ENCODE measurements at regions of chr5 and their contacts with region 1.

Region 1: GRCh38 chr5:16456103-16456832 is 9.3 kb downstream of the ZNF622 start:
- DNase-seq: no peak
- ATAC-seq: peak; percentile 74
- H3K4me3 Mint-ChIP-seq: no peak overlapping the region
- H3K27ac Mint-ChIP-seq: no peak overlapping the region
- H3K4me1 Mint-ChIP-seq: peaks cover 8% of the 10 kb centered on the region
- H3K27me3 Mint-ChIP-seq: no peaks in the 10 kb centered on the region
- CTCF ChIP-seq: peak; percentile 55; the same call in 1 of the 2 replicates

Region 2: DNA sequence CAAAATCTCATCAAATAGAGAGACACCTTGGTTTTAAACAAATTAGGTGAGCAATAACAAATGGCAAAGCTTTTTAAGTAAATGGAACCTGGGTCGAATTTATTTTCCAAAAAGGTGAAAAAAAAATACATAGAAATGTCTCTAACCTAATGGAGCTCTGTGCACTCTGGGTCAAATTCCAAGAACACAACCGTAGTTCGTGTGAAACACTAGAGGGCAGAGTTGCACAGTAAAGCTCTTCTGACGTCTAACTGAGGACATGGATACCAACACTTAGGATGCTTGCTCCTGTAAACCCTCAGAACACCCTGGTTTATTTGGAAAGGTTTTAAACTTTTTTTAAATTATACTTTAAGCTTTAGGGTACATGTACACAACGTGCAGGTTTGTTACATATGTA is 295.6 kb before region 1 on chr5:
- CTCF ChIA-PET with region 1: interaction called, 82 read pairs
- POLR2A ChIA-PET with region 1: no interaction called
- DNase-seq: no peak
- ATAC-seq: peak; percentile 99
- H3K4me3 Mint-ChIP-seq: no peak overlapping the region
- H3K27ac Mint-ChIP-seq: no peak overlapping the region
- H3K4me1 Mint-ChIP-seq: no peaks in the 10 kb centered on the region
- H3K27me3 Mint-ChIP-seq: no peaks in the 10 kb centered on the region
- CTCF ChIP-seq: peak; percentile 54

Region 3: GRCh38 chr5:16178745-16179372 is 277.4 kb before region 1 on chr5:
- CTCF ChIA-PET with region 1: interaction called, 11 read pairs
- POLR2A ChIA-PET with region 1: no interaction called
- DNase-seq: peak; percentile 96
- ATAC-seq: peak; percentile 88
- H3K4me3 Mint-ChIP-seq: peak overlapping the region; percentile 57
- H3K27ac Mint-ChIP-seq: no peak overlapping the region
- H3K4me1 Mint-ChIP-seq: peaks cover 13% of the 10 kb centered on the region
- H3K27me3 Mint-ChIP-seq: peaks cover 54% of the 10 kb centered on the region
- CTCF ChIP-seq: no peak

Region 4: DNA sequence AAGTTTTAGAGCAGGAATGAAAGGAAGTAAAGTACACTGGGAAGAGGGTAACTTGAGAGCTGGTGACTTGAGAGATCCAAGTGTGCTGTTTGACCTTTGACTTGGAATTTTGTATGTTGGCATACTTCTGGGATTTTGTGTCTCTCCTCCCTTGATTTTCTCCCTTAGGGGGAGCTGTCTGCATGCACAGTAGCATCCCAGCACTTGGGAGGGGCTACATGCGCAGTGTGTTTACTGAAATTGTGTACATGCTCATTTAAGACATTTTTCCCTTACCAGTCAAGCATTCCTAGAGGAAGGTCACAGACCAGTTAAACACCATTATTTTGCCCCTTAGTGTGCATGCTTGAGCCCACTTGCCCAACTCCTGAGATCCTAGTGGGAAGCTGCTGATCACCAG is 110.8 kb before region 1 on chr5:
- CTCF ChIA-PET with region 1: interaction called, 16 read pairs
- POLR2A ChIA-PET with region 1: no interaction called
- DNase-seq: no peak
- ATAC-seq: peak; percentile 72
- H3K4me3 Mint-ChIP-seq: no peak overlapping the region
- H3K27ac Mint-ChIP-seq: no peak overlapping the region
- H3K4me1 Mint-ChIP-seq: no peaks in the 10 kb centered on the region
- H3K27me3 Mint-ChIP-seq: no peaks in the 10 kb centered on the region; the same call in none of the 2 replicates
- CTCF ChIP-seq: no peak

Region 5: GRCh38 chr5:16427587-16427986 is 28.7 kb before region 1 on chr5:
- CTCF ChIA-PET with region 1: interaction called, 10 read pairs
- POLR2A ChIA-PET with region 1: no interaction called
- DNase-seq: no peak
- ATAC-seq: no peak
- H3K4me3 Mint-ChIP-seq: no peak overlapping the region
- H3K27ac Mint-ChIP-seq: no peak overlapping the region
- H3K4me1 Mint-ChIP-seq: peaks cover 68% of the 10 kb centered on the region
- H3K27me3 Mint-ChIP-seq: peaks cover 7% of the 10 kb centered on the region
- CTCF ChIP-seq: no peak

Measured in WTC11 (cell line).